A673 (cell line): ENCODE measurements at regions of chr15 and their contacts with region 1.

Region 1: DNA sequence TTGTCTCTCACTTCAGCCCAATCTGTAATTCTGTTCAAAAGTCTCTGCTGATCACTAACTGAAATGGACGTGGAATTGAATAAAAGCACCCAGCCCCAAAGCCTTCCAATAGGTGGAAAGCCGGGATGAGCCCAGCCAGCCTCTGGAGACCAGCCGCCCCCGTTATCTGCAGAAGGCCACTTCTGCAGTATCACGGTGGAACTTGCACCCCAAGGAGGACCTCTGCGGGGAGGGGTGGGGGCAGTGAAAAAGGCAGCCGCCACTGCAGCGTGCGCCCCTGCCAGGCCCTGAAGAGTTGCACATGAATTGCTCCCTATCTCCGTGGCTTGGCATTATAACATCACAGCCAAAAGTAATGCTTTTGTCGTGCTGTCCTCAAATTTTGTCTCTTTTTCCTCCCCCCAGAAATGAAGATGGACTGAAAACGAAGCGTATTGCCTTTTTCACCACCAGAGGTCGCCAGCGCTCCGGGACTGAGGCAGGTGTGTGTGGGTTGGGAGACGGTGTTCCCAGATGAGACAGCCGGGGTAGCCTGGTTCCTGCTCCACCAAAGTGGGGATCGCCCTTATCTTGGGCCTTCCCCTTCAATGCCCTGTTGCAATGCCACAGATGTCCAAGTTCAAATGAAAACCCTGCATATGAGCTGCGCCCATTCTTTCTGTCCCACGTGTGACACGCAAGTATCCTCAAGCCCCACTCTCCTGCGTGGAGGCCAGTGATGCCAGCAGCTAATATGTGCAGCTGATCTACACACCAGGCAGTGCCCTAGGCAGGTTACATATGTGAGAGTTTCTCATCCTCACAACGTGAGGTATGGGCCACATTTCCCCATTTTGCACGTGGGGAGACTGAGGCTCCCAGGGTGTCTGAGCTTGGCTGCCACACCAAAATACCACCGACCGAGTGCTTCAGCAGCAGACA is 96.0 kb downstream of the LRRK1 start:
- DNase-seq: peak; percentile 77
- H3K4me3 ChIP-seq: no peak overlapping the region
- H3K27ac ChIP-seq: no peak overlapping the region
- H3K4me1 ChIP-seq: no peaks in the 10 kb centered on the region
- H3K27me3 ChIP-seq: no peaks in the 10 kb centered on the region
- CTCF ChIP-seq: peak; percentile 94

Region 2: GRCh38 chr15:99863550-99864198 is 1151.5 kb before region 1 on chr15:
- CTCF ChIA-PET with region 1: interaction called, 15 read pairs
- POLR2A ChIA-PET with region 1: no interaction called
- intact Hi-C with region 1: no loop called
- DNase-seq: no peak
- H3K4me3 ChIP-seq: no peak overlapping the region
- H3K27ac ChIP-seq: no peak overlapping the region
- H3K4me1 ChIP-seq: no peaks in the 10 kb centered on the region
- H3K27me3 ChIP-seq: no peaks in the 10 kb centered on the region
- CTCF ChIP-seq: no peak

Region 3: GRCh38 chr15:100873029-100873677 is 142.0 kb before region 1 on chr15:
- CTCF ChIA-PET with region 1: no interaction called
- POLR2A ChIA-PET with region 1: no interaction called
- intact Hi-C with region 1: no loop called
- DNase-seq: peak; percentile 82
- H3K4me3 ChIP-seq: no peak overlapping the region
- H3K27ac ChIP-seq: no peak overlapping the region
- H3K4me1 ChIP-seq: no peaks in the 10 kb centered on the region
- H3K27me3 ChIP-seq: peaks cover 4% of the 10 kb centered on the region
- CTCF ChIP-seq: peak; percentile 87

Region 4: DNA sequence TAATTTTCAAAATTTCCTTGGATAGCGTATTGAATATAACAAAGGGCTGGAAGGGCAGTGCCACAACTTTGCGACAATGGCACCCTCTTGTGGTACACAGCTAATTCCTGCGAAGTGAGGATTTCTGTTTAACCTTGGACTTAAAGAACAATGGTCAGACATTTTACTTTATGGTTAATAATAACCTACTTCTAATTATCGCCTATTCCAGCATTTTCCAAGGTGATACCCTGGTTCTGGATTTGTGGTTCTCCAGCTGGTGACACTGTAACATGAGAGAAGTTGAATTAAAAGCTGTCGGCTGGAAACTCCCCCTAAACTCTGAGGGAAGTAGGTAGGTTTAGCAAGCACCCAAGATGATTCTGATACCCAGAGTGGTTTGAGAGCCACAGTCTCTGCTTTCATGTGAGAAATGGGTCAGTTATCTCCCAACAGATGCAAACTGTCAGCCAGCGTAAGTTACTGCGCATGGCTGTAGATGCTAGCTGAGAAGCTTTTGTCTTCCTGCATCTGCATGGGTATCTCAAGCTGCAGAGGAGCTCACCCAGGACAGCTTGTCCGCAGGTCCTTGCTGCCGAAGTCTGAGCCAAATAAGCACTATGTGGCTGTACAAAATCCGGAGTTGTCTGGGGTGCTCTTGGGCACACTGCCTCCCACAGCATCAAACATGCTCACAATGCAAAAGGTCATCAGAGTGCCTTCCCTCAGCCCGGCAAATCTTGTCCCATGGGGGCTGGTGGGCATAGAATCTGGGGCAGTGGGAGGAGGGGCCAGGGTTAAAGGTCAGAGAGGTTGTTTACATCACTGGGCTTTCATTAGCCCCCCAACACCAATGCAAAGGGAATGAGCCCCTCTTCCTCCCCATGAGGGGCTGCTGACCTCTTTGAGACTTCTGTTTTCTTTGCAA is 243.3 kb after region 1 on chr15:
- CTCF ChIA-PET with region 1: interaction called, 8 read pairs
- POLR2A ChIA-PET with region 1: no interaction called
- intact Hi-C with region 1: loop called (anchors 1 kb)
- DNase-seq: peak; percentile 75
- H3K4me3 ChIP-seq: no peak overlapping the region
- H3K27ac ChIP-seq: no peak overlapping the region
- H3K4me1 ChIP-seq: no peaks in the 10 kb centered on the region
- H3K27me3 ChIP-seq: no peaks in the 10 kb centered on the region
- CTCF ChIP-seq: peak; percentile 96